HCT116 (cell line): ENCODE measurements at regions of chr5 and their contacts with region 1.

Region 1: DNA sequence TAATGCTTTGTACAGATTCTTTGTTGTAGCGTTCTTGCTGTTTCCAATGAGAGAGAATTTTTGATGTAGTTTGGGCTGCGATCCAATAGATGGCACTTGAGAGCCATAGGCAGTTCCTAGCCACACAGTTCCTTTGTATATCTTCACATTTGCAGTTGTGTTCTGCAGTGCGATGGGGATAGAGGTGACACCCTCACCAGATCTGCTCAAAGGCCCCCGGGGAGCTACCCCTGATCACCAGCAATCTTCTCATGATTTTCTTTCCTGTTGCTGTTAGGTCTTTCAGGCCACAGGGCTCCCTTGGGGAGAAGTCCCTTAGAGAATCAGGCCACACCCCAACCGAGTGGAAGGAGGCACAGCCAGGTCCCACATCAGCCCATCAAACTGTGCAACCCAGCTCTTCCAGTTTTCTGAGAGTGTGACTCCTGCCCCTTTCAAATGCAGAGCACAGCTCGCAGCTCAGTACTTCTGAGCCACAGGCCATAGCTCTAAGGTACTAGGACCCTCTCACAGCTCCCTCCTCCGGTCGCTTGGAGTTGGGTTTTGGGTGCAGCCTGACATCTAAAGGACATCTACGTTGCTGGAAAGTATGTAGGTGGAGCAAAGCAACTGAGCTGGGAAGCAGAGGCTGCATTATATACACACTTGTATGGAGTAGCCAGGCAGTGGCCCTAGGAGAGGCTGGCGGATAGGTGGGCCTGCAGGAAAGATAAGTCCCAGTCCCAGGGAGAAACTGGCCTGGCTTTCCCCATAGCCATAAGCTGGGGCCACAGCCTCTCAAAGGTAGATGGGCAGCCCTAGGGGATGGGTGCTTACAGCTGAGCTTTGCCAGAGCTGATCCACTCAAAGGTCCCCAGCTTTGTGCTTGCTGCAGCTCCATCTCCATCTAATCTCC is 353.5 kb downstream of the SLCO4C1 start:
- DNase-seq: peak; percentile 27
- ATAC-seq: peak; percentile 92
- H3K4me3 ChIP-seq: no peak overlapping the region
- H3K27ac ChIP-seq: no peak overlapping the region
- H3K4me1 ChIP-seq: peaks cover 0 to 5% of the 10 kb centered on the region in 2 experiments; a peak in 2 of 4 replicates
- H3K27me3 ChIP-seq: no peaks in the 10 kb centered on the region
- CTCF ChIP-seq: peak; percentile 57 to 78 (median 76); a peak in 5 of 6 replicates
- POLR2A ChIP-seq: no peak
- RAD21 ChIP-seq: peak; percentile 75

Region 2: GRCh38 chr5:101338226-101338625 is 604.3 kb before region 1 on chr5:
- CTCF ChIA-PET with region 1: no interaction called
- POLR2A ChIA-PET with region 1: no interaction called
- RAD21 ChIA-PET with region 1: no interaction called
- intact Hi-C with region 1: no loop called
- DNase-seq: no peak
- ATAC-seq: no peak
- H3K4me3 ChIP-seq: no peak overlapping the region
- H3K27ac ChIP-seq: no peak overlapping the region
- H3K4me1 ChIP-seq: no peaks in the 10 kb centered on the region
- H3K27me3 ChIP-seq: no peaks in the 10 kb centered on the region
- CTCF ChIP-seq: no peak
- POLR2A ChIP-seq: no peak
- RAD21 ChIP-seq: no peak

Region 3: DNA sequence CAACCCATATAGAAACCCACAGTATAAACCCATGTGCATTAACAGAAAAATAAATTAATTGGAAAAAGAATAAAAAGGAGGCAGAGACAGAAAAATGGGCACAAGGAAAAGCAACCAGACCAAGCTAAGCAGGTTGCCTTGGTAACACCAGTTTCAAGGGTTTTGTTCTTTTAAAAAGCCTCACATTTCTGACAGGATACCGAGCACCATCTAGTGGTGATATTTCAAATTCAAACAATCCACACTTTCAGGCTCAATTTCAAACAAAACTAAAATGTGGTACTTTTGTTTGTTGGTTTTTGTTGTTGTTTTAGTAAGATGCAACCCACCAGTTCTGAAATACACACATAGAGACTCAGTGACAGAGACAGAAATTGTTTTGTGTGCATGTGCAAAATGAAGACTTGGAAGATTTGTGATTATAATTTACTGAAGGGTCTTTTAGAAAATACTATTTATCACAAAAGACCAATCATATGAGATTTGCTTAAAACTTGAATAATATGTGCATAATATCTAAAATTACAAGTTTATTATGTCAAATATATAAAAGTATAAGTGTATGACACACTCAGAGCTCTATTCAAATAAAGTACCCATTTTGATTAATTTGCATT is 35.3 kb after region 1 on chr5:
- CTCF ChIA-PET with region 1: interaction called, 13 read pairs
- POLR2A ChIA-PET with region 1: no interaction called
- RAD21 ChIA-PET with region 1: no interaction called
- intact Hi-C with region 1: loop called (anchors 2 kb)
- DNase-seq: peak; percentile 54
- ATAC-seq: peak; percentile 65
- H3K4me3 ChIP-seq: no peak overlapping the region
- H3K27ac ChIP-seq: no peak overlapping the region
- H3K4me1 ChIP-seq: no peaks in the 10 kb centered on the region
- H3K27me3 ChIP-seq: no peaks in the 10 kb centered on the region
- CTCF ChIP-seq: peak; percentile 46 to 73 (median 64); a peak in 5 of 6 replicates
- POLR2A ChIP-seq: no peak
- RAD21 ChIP-seq: peak; percentile 70

Region 4: GRCh38 chr5:102090770-102091381 is 148.3 kb after region 1 on chr5:
- CTCF ChIA-PET with region 1: interaction called, 3 read pairs
- POLR2A ChIA-PET with region 1: no interaction called
- RAD21 ChIA-PET with region 1: no interaction called
- intact Hi-C with region 1: loop called (anchors 5 kb)
- DNase-seq: peak; percentile 36
- ATAC-seq: peak; percentile 98
- H3K4me3 ChIP-seq: no peak overlapping the region
- H3K27ac ChIP-seq: no peak overlapping the region
- H3K4me1 ChIP-seq: no peaks in the 10 kb centered on the region
- H3K27me3 ChIP-seq: no peaks in the 10 kb centered on the region
- CTCF ChIP-seq: peak; percentile 28 to 67 (median 62); a peak in 5 of 6 replicates
- POLR2A ChIP-seq: no peak
- RAD21 ChIP-seq: peak; percentile 65

Region 5: GRCh38 chr5:102153003-102153759 is 210.6 kb after region 1 on chr5:
- CTCF ChIA-PET with region 1: interaction called, 3 read pairs
- POLR2A ChIA-PET with region 1: no interaction called
- RAD21 ChIA-PET with region 1: no interaction called
- intact Hi-C with region 1: loop called (anchors 1 kb)
- DNase-seq: peak; percentile 35
- ATAC-seq: peak; percentile 97
- H3K4me3 ChIP-seq: no peak overlapping the region
- H3K27ac ChIP-seq: no peak overlapping the region
- H3K4me1 ChIP-seq: no peaks in the 10 kb centered on the region
- H3K27me3 ChIP-seq: no peaks in the 10 kb centered on the region
- CTCF ChIP-seq: peak; percentile 35 to 72 (median 50); a peak in 5 of 6 replicates
- POLR2A ChIP-seq: no peak
- RAD21 ChIP-seq: peak; percentile 72

Region 6: DNA sequence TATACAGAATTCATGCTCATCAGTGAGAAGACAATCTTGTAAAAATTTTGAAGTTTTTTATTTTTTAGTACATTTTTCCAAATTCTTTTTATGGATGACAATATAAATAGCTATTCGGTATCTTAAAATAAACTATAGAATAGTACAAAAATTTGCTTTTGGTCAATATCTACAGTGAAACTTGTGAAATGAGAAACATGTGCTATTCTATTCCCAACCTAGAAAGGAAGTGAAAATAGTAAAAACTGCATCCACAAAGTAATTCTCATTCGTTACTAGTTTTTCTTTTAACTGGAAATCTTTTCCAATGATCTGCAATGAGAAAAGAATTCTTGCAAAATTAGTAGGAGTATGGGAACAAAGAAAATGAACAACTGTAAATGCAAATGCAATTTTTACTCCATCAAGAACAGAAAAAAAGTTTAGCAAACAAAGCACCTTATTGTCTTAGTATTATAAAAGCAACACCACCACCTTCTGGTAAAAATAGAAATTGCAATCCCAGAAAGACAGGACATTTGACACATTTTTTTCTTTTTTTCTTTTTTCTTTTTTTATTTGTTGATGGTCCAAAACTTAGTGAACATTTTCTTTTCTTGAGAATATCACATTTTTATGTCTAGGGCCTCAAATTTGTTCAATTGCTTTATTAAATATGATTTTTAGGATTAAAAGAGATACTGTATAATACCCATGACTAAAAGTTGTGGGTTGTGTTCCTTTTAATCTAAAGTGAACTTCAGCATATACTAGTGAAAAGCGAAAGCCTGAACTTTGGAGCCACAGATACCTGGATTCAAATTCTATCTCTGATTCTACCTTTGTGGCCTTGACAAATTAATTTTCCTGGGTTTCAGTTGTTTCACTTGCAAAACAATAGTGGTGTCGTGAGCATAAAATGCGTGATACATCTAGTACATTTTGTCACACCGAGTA is 281.2 kb after region 1 on chr5:
- CTCF ChIA-PET with region 1: no interaction called
- POLR2A ChIA-PET with region 1: no interaction called
- RAD21 ChIA-PET with region 1: no interaction called
- intact Hi-C with region 1: loop called (anchors 2 kb)
- DNase-seq: peak; percentile 41
- ATAC-seq: no peak
- H3K4me3 ChIP-seq: no peak overlapping the region
- H3K27ac ChIP-seq: no peak overlapping the region
- H3K4me1 ChIP-seq: no peaks in the 10 kb centered on the region
- H3K27me3 ChIP-seq: no peaks in the 10 kb centered on the region
- CTCF ChIP-seq: peak; percentile 44 to 73 (median 48); a peak in 4 of 6 replicates
- POLR2A ChIP-seq: no peak
- RAD21 ChIP-seq: peak; percentile 71